ENCODE measurements at regions of chr12 and their contacts with region 1.

Region 1: DNA sequence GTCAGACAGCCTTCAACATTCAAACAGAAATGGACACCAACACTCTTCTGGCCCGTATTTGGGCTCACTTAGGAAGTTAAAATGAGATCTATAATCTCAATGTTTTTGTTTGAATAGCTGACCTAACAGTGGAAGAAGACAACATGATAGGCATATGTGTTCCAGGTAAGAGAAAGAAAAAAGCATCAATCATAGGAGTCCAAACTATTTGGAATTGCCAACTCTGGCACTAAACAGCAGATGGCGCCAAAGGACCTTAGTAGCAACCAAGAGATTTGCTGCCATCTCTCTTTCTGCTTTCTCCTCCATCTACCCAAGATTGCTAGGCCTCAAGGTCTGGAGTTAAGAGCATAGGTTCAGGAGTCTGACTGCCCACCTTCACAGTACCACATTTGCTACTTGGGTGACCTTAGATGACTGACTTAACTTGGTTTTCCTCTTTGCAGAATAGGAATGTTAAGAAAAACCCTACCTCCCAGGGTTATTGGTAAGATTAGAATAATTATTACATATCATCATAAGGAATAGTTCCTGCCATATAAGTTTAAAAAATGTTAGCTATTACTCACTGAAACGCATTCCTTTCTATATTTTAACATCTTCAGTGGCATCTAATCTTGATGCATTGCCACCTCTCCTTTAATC is 30.2 kb downstream of the PEX5 start:
- DNase-seq: peak; percentile 79 to 90 (median 83)
- H3K4me3 ChIP-seq: no peak overlapping the region
- H3K27ac ChIP-seq: no peak overlapping the region
- H3K4me1 ChIP-seq: no peaks in the 10 kb centered on the region
- H3K27me3 ChIP-seq: no peaks in the 10 kb centered on the region

Region 2: DNA sequence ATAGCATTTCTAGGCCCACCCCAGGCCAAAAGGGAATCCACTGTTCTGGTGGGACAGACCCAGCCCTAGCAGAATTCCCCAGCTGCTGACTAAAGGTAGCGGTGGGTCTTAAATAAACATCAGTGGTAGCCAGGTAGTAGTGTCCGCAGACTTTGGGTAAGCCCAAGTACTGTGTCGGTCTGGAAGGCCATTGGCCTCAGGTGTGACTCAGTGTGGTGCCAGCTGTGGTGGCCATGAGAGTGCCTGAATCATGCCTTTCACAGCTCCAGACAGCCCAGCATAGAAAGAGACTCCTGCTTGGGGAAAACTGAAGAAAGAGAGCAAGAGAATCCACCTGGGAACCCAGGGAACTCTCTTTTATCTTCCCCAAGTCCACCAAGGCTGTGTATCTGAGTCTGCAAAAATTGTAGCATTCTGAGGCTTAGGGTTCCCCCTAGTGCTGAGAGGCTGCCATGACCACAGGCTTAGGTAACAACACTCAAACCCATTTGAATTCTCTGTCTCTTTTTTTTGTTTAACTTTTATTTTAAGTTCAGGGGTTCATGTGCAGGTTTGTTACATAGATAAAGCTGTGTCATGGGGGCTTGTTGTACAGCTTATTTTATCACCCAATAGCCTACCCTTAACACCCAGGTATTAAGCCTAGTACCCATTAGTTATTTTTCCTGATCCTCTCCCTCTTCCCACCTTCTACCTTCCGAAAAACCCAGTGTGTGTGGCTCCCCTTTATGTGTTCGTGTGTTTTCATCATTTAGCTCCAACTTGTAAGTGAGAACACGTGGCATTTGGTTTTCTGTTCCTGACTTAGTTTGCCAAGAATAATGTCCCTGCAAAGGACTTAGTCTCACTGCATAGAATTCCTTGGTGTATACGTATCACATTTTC is 240.9 kb after region 1 on chr12:
- CTCF ChIA-PET with region 1: interaction called, 20 read pairs
- POLR2A ChIA-PET with region 1: no interaction called
- DNase-seq: peak; percentile 60 to 82 (median 70)
- H3K4me3 ChIP-seq: no peak overlapping the region
- H3K27ac ChIP-seq: no peak overlapping the region
- H3K4me1 ChIP-seq: no peaks in the 10 kb centered on the region
- H3K27me3 ChIP-seq: no peaks in the 10 kb centered on the region

Region 3: GRCh38 chr12:7638760-7639555 is 419.2 kb after region 1 on chr12:
- CTCF ChIA-PET with region 1: interaction called, 13 read pairs
- POLR2A ChIA-PET with region 1: no interaction called
- DNase-seq: peak; percentile 89 to 95 (median 92)
- H3K4me3 ChIP-seq: peak overlapping the region in 5 of 7 experiments; percentile 37 to 76 (median 57)
- H3K27ac ChIP-seq: no peak overlapping the region
- H3K4me1 ChIP-seq: peaks cover 2 to 33% (median 12%) of the 10 kb centered on the region in 4 experiments
- H3K27me3 ChIP-seq: no peaks in the 10 kb centered on the region